Common myeloid progenitor, CD34-positive (primary cell): ENCODE measurements at regions of chr3 and their contacts with region 1.

Region 1: DNA sequence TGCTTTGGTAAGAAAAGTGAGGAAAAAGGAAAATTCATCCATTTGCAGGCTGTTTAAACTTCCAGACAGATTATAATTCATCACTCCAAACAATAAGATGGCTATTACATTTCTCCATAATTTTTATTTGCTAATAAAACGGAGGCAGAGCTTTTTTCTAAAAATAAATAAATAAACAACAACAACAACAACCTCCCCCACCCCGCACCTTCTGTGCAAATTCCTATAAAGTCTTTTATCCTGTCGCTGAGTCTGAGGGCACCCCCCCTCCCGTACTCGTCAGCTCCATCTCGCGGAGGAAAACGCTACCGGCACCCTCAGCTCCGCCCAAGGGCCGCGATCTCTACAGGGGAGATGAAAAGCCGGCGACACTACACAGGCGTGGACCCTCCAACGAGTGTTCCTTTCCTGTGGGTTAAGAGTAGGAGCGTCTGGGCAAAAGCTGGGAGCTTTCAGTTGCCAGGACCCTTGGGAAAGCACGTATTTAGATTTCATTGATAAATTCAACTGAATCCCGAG is 1.0 kb upstream of the ATP1B3 start:
- DNase-seq: peak; percentile 86 to 92 (median 92)
- H3K4me3 ChIP-seq: peak overlapping the region; percentile 73 to 91 (median 82)
- H3K27ac ChIP-seq: peak overlapping the region; percentile 50 to 88
- H3K4me1 ChIP-seq: peaks cover 6 to 25% (median 19%) of the 10 kb centered on the region in 4 experiments
- H3K27me3 ChIP-seq: no peaks in the 10 kb centered on the region

Region 2: GRCh38 chr3:141845407-141846049 is 29.9 kb before region 1 on chr3:
- CTCF ChIA-PET with region 1: interaction called, 10 read pairs
- POLR2A ChIA-PET with region 1: interaction called, 5 read pairs
- DNase-seq: peak; percentile 76 to 85 (median 84)
- H3K4me3 ChIP-seq: no peak overlapping the region
- H3K27ac ChIP-seq: no peak overlapping the region
- H3K4me1 ChIP-seq: peaks cover 2 to 16% (median 11%) of the 10 kb centered on the region in 4 experiments
- H3K27me3 ChIP-seq: no peaks in the 10 kb centered on the region

Region 3: GRCh38 chr3:141887051-141887450 is 11.6 kb after region 1 on chr3:
- CTCF ChIA-PET with region 1: interaction called, 15 read pairs
- POLR2A ChIA-PET with region 1: no interaction called
- DNase-seq: no peak
- H3K4me3 ChIP-seq: no peak overlapping the region
- H3K27ac ChIP-seq: no peak overlapping the region
- H3K4me1 ChIP-seq: no peaks in the 10 kb centered on the region
- H3K27me3 ChIP-seq: no peaks in the 10 kb centered on the region

Region 4: DNA sequence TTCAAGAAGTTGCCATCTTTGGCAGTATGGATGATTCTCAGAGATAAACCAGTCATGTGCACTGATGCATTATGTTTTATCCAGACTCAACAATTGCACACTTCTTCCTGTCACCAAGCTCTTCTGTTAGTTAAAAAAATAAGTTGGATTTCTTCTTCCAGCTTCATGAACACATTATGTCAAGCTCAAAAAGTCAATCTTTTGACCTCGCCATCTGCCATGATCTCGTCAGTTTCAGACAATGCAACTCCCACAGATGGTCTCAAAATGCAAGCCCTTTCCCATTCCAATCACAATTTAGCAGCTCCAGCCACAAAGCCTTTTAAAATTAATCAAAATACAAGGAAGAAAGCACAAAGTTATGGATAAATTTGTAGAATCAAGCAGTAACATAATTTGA is 231.1 kb after region 1 on chr3:
- CTCF ChIA-PET with region 1: no interaction called
- POLR2A ChIA-PET with region 1: no interaction called
- DNase-seq: no peak
- H3K4me3 ChIP-seq: no peak overlapping the region
- H3K27ac ChIP-seq: no peak overlapping the region
- H3K4me1 ChIP-seq: peaks cover 0 to 4% (median 3%) of the 10 kb centered on the region in 4 experiments
- H3K27me3 ChIP-seq: no peaks in the 10 kb centered on the region

Region 5: DNA sequence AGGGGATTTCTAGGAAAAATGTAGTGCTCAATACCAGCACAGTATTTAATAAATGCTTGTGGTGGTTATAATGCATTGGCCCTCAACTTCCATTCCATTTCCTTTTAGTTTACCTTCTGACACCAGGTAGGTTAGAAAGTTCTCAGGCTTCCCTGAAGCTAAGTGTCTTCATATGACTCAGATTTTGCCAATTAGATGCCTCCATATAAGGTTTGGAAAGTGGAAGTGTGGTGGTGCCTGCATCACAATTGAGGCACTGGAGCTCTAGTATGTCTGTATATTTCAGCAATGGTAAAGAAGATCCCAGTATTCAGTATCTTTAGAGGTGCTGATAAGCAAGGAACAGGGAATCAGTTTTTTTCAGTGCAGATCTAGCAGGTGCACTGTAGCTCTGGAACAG is 554.1 kb after region 1 on chr3:
- CTCF ChIA-PET with region 1: no interaction called
- POLR2A ChIA-PET with region 1: no interaction called
- DNase-seq: no peak
- H3K4me3 ChIP-seq: no peak overlapping the region
- H3K27ac ChIP-seq: no peak overlapping the region
- H3K4me1 ChIP-seq: no peaks in the 10 kb centered on the region
- H3K27me3 ChIP-seq: no peaks in the 10 kb centered on the region